ENCODE measurements at regions of chr3 and their contacts with region 1.

Region 1: GRCh38 chr3:177359593-177360357 is 162.5 kb upstream of the TBL1XR1 start:
- H3K4me3 ChIP-seq: peak overlapping the region; percentile 22
- H3K27ac ChIP-seq: peak overlapping the region; percentile 63; the same call in 1 of the 2 replicates
- H3K4me1 ChIP-seq: peaks cover 3% of the 10 kb centered on the region
- CTCF ChIP-seq: no peak

Region 2: GRCh38 chr3:177197041-177197727 is 162.6 kb before region 1 on chr3 and contains the start of gene TBL1XR1:
- CTCF ChIA-PET with region 1: interaction called, 4 read pairs
- POLR2A ChIA-PET with region 1: interaction called, 17 read pairs
- H3K4me3 ChIP-seq: peak within 1 kb of the TSS; percentile 79
- H3K27ac ChIP-seq: peak within 1 kb of the TSS; percentile 99
- H3K4me1 ChIP-seq: peaks cover 3% of the 10 kb centered on the region
- CTCF ChIP-seq: no peak

Region 3: GRCh38 chr3:177337541-177338331 is 22.0 kb before region 1 on chr3:
- CTCF ChIA-PET with region 1: no interaction called
- POLR2A ChIA-PET with region 1: no interaction called
- H3K4me3 ChIP-seq: no peak overlapping the region
- H3K27ac ChIP-seq: no peak overlapping the region
- H3K4me1 ChIP-seq: no peaks in the 10 kb centered on the region
- CTCF ChIP-seq: no peak